Naive thymus-derived CD4-positive, alpha-beta T cell (primary cell): ENCODE measurements at regions of chr5 and their contacts with region 1.

Region 1: GRCh38 chr5:143361436-143361835 is 42.0 kb downstream of the NR3C1 start:
- DNase-seq: no peak
- ATAC-seq: no peak
- H3K4me3 ChIP-seq: no peak overlapping the region
- H3K4me3 Mint-ChIP-seq: peak overlapping the region in 5 of 10 donors; percentile 6 to 70 (median 28)
- H3K27ac ChIP-seq: peak overlapping the region; percentile 11
- H3K27ac Mint-ChIP-seq: peak overlapping the region in 6 of 9 donors; percentile 15 to 75 (median 54)
- H3K4me1 ChIP-seq: peaks cover 21 to 27% of the 10 kb centered on the region in 2 donors
- H3K4me1 Mint-ChIP-seq: peaks cover 56 to 91% (median 66%) of the 10 kb centered on the region in 7 donors
- H3K27me3 ChIP-seq: no peaks in the 10 kb centered on the region
- H3K27me3 Mint-ChIP-seq: no peaks in the 10 kb centered on the region

Region 2: GRCh38 chr5:143349177-143349576 is 12.3 kb before region 1 on chr5:
- CTCF ChIA-PET with region 1: interaction called, 4 read pairs
- POLR2A ChIA-PET with region 1: interaction called, 4 read pairs
- intact Hi-C with region 1: loop called in 1 of 2 experiments (anchors 1 kb)
- DNase-seq: no peak
- ATAC-seq: no peak
- H3K4me3 ChIP-seq: no peak overlapping the region
- H3K4me3 Mint-ChIP-seq: no peak overlapping the region
- H3K27ac ChIP-seq: no peak overlapping the region
- H3K27ac Mint-ChIP-seq: no peak overlapping the region
- H3K4me1 ChIP-seq: peaks cover 44 to 62% of the 10 kb centered on the region in 2 donors
- H3K4me1 Mint-ChIP-seq: peaks cover 12 to 43% (median 36%) of the 10 kb centered on the region in 7 donors
- H3K27me3 ChIP-seq: no peaks in the 10 kb centered on the region
- H3K27me3 Mint-ChIP-seq: no peaks in the 10 kb centered on the region